HEK293 (cell line): ENCODE measurements at regions of chr2 and their contacts with region 1.

Region 1: GRCh38 chr2:88187038-88187676 is 17.0 kb downstream of the THNSL2 start:
- H3K4me3 ChIP-seq: no peak overlapping the region
- H3K27ac ChIP-seq: no peak overlapping the region
- H3K4me1 ChIP-seq: no peaks in the 10 kb centered on the region
- CTCF ChIP-seq: peak; percentile 68

Region 2: DNA sequence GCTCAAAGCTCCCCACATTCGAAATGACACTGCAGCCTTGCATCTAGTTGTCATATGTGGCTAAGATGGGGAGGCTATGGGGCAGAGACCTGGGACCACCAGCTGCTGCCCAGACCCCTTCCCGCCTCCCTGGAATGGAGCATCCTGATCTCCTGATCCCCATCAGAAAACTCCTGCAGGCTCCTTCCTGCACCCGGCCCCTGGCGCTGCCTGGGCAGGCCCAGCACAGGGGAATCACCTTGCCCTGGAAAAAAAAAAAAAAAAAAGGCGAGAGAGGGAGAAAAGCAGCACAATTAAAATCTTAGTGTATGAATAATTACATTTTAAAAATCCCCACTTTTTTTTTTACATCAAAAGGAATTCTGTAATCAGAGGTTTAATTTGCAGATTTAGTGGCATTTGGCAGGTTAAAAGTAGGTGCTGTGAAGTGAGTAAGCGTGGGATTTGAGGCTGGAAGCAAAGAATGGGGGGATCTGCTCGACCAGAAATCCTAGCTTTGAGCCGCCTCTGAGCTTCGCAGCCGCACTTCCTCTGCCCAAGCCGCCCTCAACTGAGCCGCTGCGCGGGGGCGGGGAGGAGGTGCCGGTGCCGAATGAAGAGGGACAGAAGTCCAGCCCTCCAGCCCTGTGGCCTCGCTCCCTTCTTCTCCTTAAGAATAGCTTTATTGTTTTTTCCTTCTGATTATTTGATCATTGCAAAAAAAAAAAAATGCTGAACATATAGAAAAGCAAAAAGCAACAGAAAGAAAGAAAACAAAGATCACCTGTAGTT is 12.9 kb after region 1 on chr2:
- CTCF ChIA-PET with region 1: interaction called, 37 read pairs
- POLR2A ChIA-PET with region 1: no interaction called
- H3K4me3 ChIP-seq: no peak overlapping the region
- H3K27ac ChIP-seq: no peak overlapping the region
- H3K4me1 ChIP-seq: peaks cover 2% of the 10 kb centered on the region; the same call in 1 of the 2 replicates
- CTCF ChIP-seq: no peak

Region 3: DNA sequence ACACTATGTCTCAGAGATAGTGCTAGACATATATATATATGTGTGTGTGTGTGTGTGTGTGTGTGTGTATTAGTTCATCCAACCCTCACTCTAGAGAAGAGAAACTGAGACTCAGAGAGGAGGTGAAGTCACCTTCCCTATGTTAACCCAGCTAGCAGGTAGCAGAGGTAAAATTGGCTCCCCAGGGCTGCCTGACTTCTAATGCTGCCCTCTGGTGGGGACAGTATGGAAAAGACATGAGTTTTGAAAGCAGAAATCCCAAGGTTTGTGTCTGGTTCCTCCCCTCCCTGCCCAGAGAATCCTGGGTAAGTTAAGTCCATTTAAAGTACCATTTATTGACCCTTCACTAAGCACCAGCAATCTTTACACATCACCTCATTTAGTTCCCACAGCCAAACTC is 120.7 kb after region 1 on chr2:
- CTCF ChIA-PET with region 1: interaction called, 17 read pairs
- POLR2A ChIA-PET with region 1: interaction called, 3 read pairs
- H3K4me3 ChIP-seq: no peak overlapping the region
- H3K27ac ChIP-seq: no peak overlapping the region
- H3K4me1 ChIP-seq: no peaks in the 10 kb centered on the region
- CTCF ChIP-seq: no peak

Region 4: DNA sequence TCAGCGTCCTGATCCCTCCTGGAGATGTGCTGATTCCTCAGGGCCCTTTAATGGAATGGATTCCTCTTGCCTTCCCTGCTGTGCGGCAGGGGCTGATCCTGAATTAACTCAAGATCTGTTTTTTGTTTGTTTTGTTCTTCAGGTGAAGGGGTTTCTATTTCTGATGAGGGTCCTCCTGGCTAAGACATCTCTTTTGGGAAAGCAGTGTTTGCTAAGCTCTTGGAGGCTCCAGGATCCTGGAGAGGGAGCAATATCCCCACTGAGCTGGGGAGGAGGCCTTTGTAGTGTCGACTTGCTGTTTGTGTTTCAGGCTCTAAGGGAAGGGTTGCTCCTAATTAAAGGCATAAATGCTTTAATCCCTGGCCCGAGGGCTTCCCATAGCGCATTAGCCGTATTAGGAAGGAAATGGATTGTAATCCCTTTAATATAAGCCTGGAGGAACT is 330.6 kb after region 1 on chr2:
- CTCF ChIA-PET with region 1: no interaction called
- POLR2A ChIA-PET with region 1: no interaction called
- H3K4me3 ChIP-seq: no peak overlapping the region
- H3K27ac ChIP-seq: no peak overlapping the region
- H3K4me1 ChIP-seq: no peaks in the 10 kb centered on the region
- CTCF ChIP-seq: no peak